Activated B cell treated with CpG ODN at 0.5 μM for 24 hours (primary cell): ENCODE measurements at regions of chr19 and their contacts with region 1.

Region 1: GRCh38 chr19:7852851-7853769 is 21.1 kb downstream of the PRR36 start:
- DNase-seq: peak; percentile 68
- ATAC-seq: peak; percentile 89
- H3K4me3 Mint-ChIP-seq: no peak overlapping the region
- H3K27ac Mint-ChIP-seq: no peak overlapping the region
- H3K4me1 Mint-ChIP-seq: peaks cover 4% of the 10 kb centered on the region
- H3K27me3 Mint-ChIP-seq: no peaks in the 10 kb centered on the region
- CTCF ChIP-seq: peak; percentile 73

Region 2: DNA sequence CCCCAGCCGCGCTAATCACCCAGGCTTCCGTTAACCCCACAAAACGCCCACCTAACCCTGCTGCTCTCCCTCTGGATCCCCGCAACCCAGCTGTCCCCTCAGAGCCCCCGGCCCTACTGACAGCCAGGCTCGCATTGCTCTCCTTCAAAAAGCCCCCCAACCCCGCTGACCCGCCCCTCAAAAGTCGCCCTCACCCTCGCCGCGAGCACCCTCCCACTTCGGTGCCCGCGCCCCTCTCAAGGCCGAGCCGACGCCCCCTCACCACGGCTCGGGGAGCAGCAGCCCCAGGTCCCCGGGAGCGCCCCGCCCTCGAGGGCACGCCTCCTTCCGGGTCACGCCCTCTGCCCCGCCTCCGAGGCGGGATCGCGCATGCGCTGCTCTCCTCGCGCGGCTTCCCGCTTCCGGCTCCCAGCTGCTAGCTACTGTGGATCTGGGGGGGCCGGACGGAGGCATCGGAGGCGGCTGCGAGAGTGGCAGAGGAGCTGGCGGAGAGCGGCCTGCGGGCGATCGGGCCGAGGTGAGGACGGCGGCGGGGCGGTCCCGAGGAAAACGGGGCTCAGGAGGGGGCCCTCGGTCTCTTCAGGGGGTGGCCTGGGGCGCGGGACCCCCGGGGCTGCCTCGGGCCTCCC is 458.3 kb before region 1 on chr19:
- CTCF ChIA-PET with region 1: no interaction called
- POLR2A ChIA-PET with region 1: no interaction called
- intact Hi-C with region 1: no loop called
- DNase-seq: peak; percentile 96
- ATAC-seq: peak; percentile 83
- H3K4me3 Mint-ChIP-seq: peak overlapping the region; percentile 92
- H3K27ac Mint-ChIP-seq: peak overlapping the region; percentile 87
- H3K4me1 Mint-ChIP-seq: peaks cover 41% of the 10 kb centered on the region
- H3K27me3 Mint-ChIP-seq: no peaks in the 10 kb centered on the region
- CTCF ChIP-seq: no peak

Region 3: GRCh38 chr19:7652061-7652641 is 201.0 kb before region 1 on chr19:
- CTCF ChIA-PET with region 1: no interaction called
- POLR2A ChIA-PET with region 1: no interaction called
- intact Hi-C with region 1: loop called (anchors 1 kb)
- DNase-seq: peak; percentile 82
- ATAC-seq: peak; percentile 87
- H3K4me3 Mint-ChIP-seq: peak overlapping the region; percentile 78
- H3K27ac Mint-ChIP-seq: peak overlapping the region; percentile 41
- H3K4me1 Mint-ChIP-seq: peaks cover 8% of the 10 kb centered on the region
- H3K27me3 Mint-ChIP-seq: no peaks in the 10 kb centered on the region
- CTCF ChIP-seq: peak; percentile 81

Region 4: GRCh38 chr19:7815325-7815724 is 37.8 kb before region 1 on chr19:
- CTCF ChIA-PET with region 1: no interaction called
- POLR2A ChIA-PET with region 1: no interaction called
- intact Hi-C with region 1: no loop called
- DNase-seq: peak; percentile 35
- ATAC-seq: peak; percentile 77
- H3K4me3 Mint-ChIP-seq: peak overlapping the region; percentile 71
- H3K27ac Mint-ChIP-seq: peak overlapping the region; percentile 76
- H3K4me1 Mint-ChIP-seq: peaks cover 37% of the 10 kb centered on the region
- H3K27me3 Mint-ChIP-seq: peaks cover 5% of the 10 kb centered on the region
- CTCF ChIP-seq: no peak

Region 5: GRCh38 chr19:7841751-7842660 is 11.1 kb before region 1 on chr19:
- CTCF ChIA-PET with region 1: no interaction called
- POLR2A ChIA-PET with region 1: no interaction called
- intact Hi-C with region 1: no loop called
- DNase-seq: no peak
- ATAC-seq: no peak
- H3K4me3 Mint-ChIP-seq: no peak overlapping the region
- H3K27ac Mint-ChIP-seq: no peak overlapping the region
- H3K4me1 Mint-ChIP-seq: no peaks in the 10 kb centered on the region
- H3K27me3 Mint-ChIP-seq: no peaks in the 10 kb centered on the region
- CTCF ChIP-seq: no peak

Region 6: GRCh38 chr19:7868676-7869452 is 15.8 kb after region 1 on chr19:
- CTCF ChIA-PET with region 1: interaction called, 5 read pairs
- POLR2A ChIA-PET with region 1: no interaction called
- intact Hi-C with region 1: loop called (anchors 2 kb)
- DNase-seq: peak; percentile 83
- ATAC-seq: peak; percentile 75
- H3K4me3 Mint-ChIP-seq: peak overlapping the region; percentile 81
- H3K27ac Mint-ChIP-seq: peak overlapping the region; percentile 73
- H3K4me1 Mint-ChIP-seq: peaks cover 41% of the 10 kb centered on the region
- H3K27me3 Mint-ChIP-seq: peaks cover 30% of the 10 kb centered on the region
- CTCF ChIP-seq: peak; percentile 56

Region 7: DNA sequence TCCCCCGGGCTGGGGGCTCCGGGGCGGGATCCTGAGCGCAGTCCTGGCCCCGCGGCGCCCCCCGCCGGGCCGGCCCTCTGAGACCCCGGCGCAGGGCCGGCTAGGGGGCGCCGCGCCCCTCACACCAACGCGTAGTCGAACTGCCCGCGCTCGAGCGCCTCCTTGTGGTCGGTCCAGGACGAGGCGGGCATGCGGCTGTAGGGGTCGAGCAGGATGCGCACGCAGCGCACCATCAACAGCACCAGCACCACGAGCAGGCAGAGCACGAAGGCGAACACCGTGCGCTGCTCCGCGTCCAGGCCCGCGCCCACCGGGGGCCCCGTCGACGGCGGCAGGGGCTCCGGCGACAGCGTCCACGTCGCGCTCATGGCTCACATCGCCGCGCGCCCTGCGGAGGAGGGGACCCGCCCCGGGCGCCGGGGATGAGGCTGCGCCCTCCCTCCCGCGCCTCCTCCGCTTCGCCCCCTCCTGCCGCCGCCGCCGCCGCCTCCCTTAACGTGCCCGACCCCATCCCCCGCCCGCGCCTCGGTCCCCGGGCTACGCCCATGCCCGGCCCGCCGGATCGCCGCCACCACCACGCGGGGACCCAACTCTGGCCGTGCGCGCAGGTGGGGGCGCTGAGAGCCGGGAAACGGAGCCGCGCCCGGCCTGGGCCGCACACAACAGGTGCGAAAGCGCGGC is 72.2 kb after region 1 on chr19:
- CTCF ChIA-PET with region 1: no interaction called
- POLR2A ChIA-PET with region 1: no interaction called
- intact Hi-C with region 1: loop called (anchors 1 kb)
- DNase-seq: peak; percentile 75
- ATAC-seq: peak; percentile 8
- H3K4me3 Mint-ChIP-seq: peak overlapping the region; percentile 84
- H3K27ac Mint-ChIP-seq: no peak overlapping the region
- H3K4me1 Mint-ChIP-seq: peaks cover 30% of the 10 kb centered on the region
- H3K27me3 Mint-ChIP-seq: peaks cover 1% of the 10 kb centered on the region
- CTCF ChIP-seq: peak; percentile 29